Activated CD4-positive, alpha-beta memory T cell treated with anti-CD3 and anti-CD28 coated beads, Interleukin-2, amount 10 ng/mL, durations not matched to agents 7 days and 5 days (primary cell): ENCODE measurements at regions of chr3 and their contacts with region 1.

Region 1: DNA sequence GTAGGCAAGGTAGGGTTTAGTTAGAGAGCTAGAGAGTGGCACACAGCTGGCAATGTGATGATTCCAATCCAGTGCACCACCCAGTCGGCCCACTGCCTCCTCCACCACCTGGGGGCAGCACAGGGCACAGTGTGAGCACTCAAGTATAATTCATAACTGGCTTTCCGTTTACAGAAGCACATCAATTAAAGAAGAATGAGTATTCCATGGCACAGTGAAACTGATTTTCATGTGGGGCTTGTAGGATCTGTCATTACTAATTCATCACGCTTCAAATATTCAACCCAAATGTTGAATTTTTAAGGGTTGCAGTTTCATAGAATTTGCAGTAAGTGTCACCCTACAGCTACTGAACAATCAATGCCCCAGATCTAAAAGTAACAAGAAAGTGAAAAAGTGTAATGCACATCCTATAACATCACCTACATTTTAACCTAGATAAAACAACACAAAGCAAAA is 149.9 kb downstream of the IGSF11 start:
- DNase-seq: peak; percentile 75
- H3K4me3 Mint-ChIP-seq: no peak overlapping the region
- H3K27ac Mint-ChIP-seq: no peak overlapping the region
- H3K4me1 Mint-ChIP-seq: no peaks in the 10 kb centered on the region
- H3K27me3 Mint-ChIP-seq: peaks cover 30% of the 10 kb centered on the region

Region 2: DNA sequence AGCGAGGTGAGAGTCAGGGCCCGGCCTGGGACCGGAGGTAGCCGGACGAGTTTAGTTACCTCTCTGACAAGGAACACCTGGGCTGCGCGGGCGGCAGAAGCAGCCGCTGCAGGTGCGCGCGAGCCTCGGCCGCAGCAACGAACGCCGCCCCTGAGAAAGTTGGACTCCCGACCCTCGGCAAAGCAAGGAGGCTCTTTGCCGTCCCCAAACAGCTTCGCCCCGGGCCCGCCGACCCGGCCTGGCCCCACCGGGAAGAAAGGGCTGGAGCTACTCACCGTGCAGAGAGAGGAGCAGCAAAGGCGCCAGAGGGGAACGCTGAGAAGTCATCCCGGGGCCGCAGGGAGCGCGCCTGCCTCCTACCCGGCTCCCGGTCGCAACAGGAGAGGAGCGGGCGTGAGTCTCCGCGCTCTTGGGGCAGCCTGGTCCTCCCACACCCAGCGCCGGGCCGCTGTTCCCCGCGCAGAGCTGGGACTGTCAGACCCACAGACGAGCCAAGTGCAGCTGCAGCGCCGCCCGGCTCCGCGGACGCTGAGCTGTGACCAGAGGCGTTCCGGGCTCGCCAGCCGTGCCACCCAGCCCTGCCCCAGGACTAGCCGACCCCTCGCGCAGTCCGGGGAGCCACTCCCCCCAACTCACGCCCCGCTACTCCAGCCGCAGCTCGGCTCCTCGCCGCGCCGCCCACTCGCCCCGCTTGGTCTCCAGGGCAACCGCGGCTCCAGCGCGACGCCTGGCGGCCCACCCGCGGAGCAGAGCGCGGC is 149.7 kb after region 1 on chr3 and contains the start of gene IGSF11:
- CTCF ChIA-PET with region 1: interaction called, 182 read pairs
- POLR2A ChIA-PET with region 1: no interaction called
- DNase-seq: peak; percentile 53
- H3K4me3 Mint-ChIP-seq: peak within 1 kb of the TSS; percentile 73
- H3K27ac Mint-ChIP-seq: no peak within 1 kb of the TSS
- H3K4me1 Mint-ChIP-seq: peaks cover 11% of the 10 kb centered on the region
- H3K27me3 Mint-ChIP-seq: peaks cover 50% of the 10 kb centered on the region
- total RNA-seq, gene IGSF11: 0.38 TPM in 1 of 2 experiments, not detected in the other

Region 3: DNA sequence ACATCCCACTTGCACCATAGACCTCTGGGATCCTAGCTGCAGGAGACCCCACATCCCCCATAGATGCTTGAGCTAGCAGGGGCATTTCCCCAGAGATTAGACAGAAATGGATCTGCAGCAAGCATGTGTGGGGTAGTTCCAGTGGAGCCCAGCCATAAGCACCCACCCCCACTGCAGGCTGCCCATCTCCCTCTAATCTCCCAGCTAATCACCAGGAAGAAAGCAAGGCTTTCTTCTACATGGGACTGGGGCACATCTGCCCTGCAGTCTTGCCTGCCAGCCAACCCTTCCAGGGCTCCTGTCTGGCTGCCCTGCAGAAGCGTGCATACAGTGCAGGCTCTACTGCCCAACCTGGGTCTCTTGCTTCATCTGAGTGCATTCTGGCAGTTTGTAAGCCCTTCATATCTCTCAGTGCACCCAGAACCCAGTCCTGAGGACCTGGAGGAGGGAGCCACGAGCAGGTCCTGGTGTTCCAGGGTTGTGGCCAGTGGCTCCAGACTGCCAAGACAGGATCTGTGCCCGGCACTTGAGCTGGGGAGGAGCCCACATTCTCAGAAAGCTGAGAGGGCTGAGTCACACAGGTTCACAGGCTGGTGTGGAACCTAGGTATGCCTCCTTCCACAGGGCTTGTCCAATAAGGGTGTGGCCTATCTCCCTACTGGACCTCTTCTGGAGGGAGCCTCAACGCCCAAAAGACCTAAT is 199.7 kb after region 1 on chr3:
- CTCF ChIA-PET with region 1: interaction called, 10 read pairs
- POLR2A ChIA-PET with region 1: no interaction called
- DNase-seq: no peak
- H3K4me3 Mint-ChIP-seq: no peak overlapping the region
- H3K27ac Mint-ChIP-seq: no peak overlapping the region
- H3K4me1 Mint-ChIP-seq: no peaks in the 10 kb centered on the region
- H3K27me3 Mint-ChIP-seq: peaks cover 14% of the 10 kb centered on the region

Region 4: DNA sequence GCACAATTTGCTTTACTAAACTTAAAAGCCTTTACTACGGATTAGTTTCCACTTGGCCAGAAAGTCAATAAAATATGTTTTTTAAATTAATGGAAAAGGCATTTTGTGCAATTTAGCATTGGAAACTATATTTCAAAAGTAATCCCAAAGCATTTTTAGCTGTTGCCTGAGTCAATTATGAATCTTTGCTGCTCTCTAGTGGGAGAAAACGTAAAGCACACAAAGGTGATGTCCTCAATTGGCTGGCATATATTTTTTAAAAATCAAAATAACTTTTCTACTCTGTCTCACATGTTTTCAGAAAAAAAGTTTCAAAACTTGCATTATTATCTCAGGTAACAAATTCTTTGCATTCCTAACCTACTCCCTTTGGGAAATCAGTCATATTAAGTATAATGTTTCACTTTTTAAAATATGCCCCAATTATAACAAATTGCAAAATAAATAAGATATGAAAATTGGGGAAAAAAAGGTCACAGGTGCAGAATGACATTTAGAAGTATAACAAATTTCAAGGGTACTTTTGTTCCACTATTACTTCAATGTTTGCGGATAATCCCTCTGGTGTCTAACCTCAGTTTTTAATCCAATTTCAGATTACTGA is 213.9 kb after region 1 on chr3:
- CTCF ChIA-PET with region 1: interaction called, 160 read pairs
- POLR2A ChIA-PET with region 1: no interaction called
- DNase-seq: no peak
- H3K4me3 Mint-ChIP-seq: no peak overlapping the region
- H3K27ac Mint-ChIP-seq: no peak overlapping the region
- H3K4me1 Mint-ChIP-seq: no peaks in the 10 kb centered on the region
- H3K27me3 Mint-ChIP-seq: peaks cover 7% of the 10 kb centered on the region

Region 5: DNA sequence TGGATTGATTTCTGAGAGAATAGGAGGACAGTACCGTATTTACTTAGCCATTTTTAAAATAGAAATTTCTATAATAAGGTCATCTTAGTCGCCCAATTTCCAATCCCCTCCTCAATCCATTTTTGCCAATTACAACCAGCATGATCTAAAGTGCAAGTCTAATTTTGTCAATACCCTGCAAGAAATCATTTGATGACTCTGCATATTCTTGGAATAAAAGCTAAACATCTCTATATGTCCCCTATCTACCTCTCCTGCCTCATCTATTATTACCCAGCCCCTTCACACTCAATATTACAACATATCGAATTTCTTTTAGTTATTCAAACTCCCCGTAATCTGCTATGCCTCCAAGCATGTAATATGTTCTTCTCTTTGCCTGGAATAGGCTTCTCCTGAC is 219.3 kb after region 1 on chr3:
- CTCF ChIA-PET with region 1: interaction called, 160 read pairs
- POLR2A ChIA-PET with region 1: no interaction called
- DNase-seq: no peak
- H3K4me3 Mint-ChIP-seq: no peak overlapping the region
- H3K27ac Mint-ChIP-seq: no peak overlapping the region
- H3K4me1 Mint-ChIP-seq: no peaks in the 10 kb centered on the region
- H3K27me3 Mint-ChIP-seq: peaks cover 6% of the 10 kb centered on the region